CD14-positive monocyte (primary cell): ENCODE measurements at regions of chr1 and their contacts with region 1.

Region 1: DNA sequence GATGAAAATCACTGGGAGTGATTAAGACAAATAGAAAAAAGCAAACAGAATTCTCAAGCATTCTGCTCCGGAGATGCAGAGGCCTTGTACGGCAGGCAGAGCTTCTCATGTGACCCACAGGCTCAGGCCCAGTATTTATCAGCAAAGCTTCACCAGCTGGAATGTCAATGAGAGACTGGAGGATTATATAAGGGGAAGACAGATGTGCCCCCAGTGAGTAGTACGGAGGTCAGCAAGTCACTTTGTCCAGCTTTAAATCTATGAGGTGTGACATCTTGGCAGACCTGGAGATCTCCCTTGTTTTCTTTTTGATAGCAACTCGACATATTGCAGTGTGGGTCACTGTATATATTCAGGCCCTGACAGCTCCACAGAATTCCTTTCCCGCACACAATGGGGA is 106.8 kb downstream of the HHIPL2 start:
- DNase-seq: no peak
- H3K4me3 ChIP-seq: no peak overlapping the region
- H3K4me3 Mint-ChIP-seq: no peak overlapping the region
- H3K27ac ChIP-seq: no peak overlapping the region
- H3K27ac Mint-ChIP-seq: no peak overlapping the region
- H3K4me1 ChIP-seq: no peaks in the 10 kb centered on the region
- H3K4me1 Mint-ChIP-seq: no peaks in the 10 kb centered on the region
- H3K27me3 ChIP-seq: no peaks in the 10 kb centered on the region
- H3K27me3 Mint-ChIP-seq: peaks cover 0 to 5% (median 4%) of the 10 kb centered on the region in 3 donors
- CTCF ChIP-seq: no peak

Region 2: DNA sequence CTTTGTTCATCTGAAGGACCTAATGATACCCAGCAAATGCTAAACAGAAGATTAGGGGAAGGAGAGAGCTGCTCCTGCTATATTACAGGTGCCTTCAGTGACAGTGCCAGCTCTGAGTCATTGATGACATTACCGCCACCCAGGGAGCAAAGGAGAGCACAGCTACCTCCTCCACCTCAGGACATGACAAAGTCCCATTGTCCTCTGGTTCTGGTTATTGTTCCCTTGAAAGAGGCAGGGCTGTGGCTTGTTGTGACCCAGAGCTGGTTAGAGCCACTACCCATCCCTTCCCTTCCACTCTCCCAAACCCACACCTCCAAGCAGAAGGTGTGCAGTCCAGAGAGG is 335.7 kb before region 1 on chr1:
- intact Hi-C with region 1: loop called in 1 of 2 experiments (anchors 10 kb)
- DNase-seq: no peak
- H3K4me3 ChIP-seq: no peak overlapping the region
- H3K4me3 Mint-ChIP-seq: no peak overlapping the region
- H3K27ac ChIP-seq: no peak overlapping the region
- H3K27ac Mint-ChIP-seq: no peak overlapping the region
- H3K4me1 ChIP-seq: no peaks in the 10 kb centered on the region
- H3K4me1 Mint-ChIP-seq: no peaks in the 10 kb centered on the region
- H3K27me3 ChIP-seq: no peaks in the 10 kb centered on the region
- H3K27me3 Mint-ChIP-seq: peaks cover 0 to 6% (median 0%) of the 10 kb centered on the region in 3 donors
- CTCF ChIP-seq: no peak